Activated CD4-positive, alpha-beta T cell treated with anti-CD3 and anti-CD28 coated beads for 36 hours (primary cell): ENCODE measurements at regions of chr13 and their contacts with region 1.

Region 1: DNA sequence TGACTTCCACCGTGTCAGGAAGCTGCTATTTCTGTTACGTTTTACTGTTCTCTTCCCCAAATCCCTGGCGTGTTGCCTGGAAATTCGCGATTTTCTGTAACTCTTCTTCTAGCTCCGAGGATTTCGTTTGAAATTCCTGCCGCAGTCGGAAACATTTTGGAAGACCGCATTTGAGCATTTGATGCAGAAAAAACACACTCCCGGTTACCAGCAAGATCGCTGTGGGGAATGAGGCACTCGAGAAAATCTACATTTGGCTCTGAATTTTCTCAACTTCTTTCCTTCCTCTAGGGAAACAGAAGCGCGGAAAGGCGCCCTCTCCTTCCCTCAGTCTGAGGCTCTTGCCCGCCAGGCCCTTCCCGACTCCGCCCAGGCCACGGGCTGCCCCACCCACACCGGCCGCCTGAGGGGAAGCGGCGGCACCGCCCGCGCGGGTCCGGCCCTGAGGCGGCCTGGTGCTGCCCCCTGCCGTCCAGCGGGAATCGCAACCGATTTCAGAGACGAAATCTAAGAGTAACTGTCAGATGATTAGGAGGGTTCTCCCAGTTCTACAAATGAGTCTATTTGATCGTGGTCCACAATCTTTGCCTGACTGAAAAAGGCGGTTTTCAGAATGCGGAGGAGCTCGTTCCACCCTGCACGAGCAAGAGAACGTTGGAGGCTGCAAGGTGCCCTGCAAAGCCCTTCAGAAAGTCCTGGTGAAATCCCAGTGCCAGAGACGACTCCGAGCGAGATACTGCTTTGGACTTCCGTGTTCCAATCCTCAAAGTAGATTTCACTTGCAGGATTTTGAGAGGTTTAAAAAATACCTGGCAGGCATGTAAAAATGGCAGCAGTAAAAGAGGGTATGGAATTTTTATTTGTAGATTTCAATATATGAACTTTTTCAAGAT is 18.4 kb upstream of the TUBGCP3 start:
- DNase-seq: peak; percentile 94
- ATAC-seq: peak; percentile 100
- H3K4me3 Mint-ChIP-seq: peak overlapping the region; percentile 69
- H3K27ac Mint-ChIP-seq: peak overlapping the region; percentile 38
- H3K4me1 Mint-ChIP-seq: peaks cover 7% of the 10 kb centered on the region
- H3K27me3 Mint-ChIP-seq: peaks cover 14% of the 10 kb centered on the region

Region 2: DNA sequence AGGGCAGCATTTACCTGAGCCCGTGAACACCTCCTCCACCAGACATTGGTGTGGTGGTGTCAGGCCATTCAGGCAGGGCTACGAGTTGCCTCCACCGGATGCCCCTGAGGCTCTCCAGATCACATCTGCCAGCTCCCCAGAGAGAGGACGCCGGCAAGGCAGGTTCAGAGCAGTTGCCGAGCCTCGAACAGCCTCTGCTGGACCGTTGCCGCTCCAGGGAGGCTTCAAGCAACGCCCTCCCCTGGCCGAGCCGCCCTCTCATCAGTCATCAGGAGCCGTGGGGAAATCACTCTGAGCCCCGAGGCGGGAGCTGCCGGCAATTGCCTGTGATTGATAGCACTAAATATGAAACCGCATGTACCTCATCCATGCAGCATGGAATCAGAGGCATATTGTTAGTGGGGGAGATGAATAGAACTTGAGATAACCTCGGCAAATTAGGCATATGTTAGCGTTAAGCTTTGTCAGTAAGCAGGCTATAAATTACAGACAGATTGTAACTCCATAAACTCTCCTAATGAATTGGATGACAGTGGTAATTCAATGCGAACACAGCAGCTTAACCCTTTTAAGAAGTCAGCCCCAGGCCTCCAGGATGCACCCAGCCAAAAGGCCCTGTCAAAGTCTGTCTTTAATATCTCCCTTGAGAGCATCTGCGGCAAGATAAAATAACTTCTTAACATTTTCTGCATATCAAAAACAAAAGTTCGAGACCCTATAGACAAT is 260.0 kb before region 1 on chr13:
- CTCF ChIA-PET with region 1: no interaction called
- POLR2A ChIA-PET with region 1: no interaction called
- intact Hi-C with region 1: loop called in 1 of 2 experiments (anchors 10 kb)
- DNase-seq: peak; percentile 41
- ATAC-seq: no peak
- H3K4me3 Mint-ChIP-seq: no peak overlapping the region
- H3K27ac Mint-ChIP-seq: no peak overlapping the region
- H3K4me1 Mint-ChIP-seq: peaks cover 2% of the 10 kb centered on the region
- H3K27me3 Mint-ChIP-seq: peaks cover 43% of the 10 kb centered on the region

Region 3: GRCh38 chr13:112510002-112510780 is 96.2 kb before region 1 on chr13:
- CTCF ChIA-PET with region 1: interaction called, 3 read pairs
- POLR2A ChIA-PET with region 1: no interaction called
- intact Hi-C with region 1: loop called in 1 of 2 experiments (anchors 5 kb)
- DNase-seq: peak; percentile 12
- ATAC-seq: no peak
- H3K4me3 Mint-ChIP-seq: no peak overlapping the region
- H3K27ac Mint-ChIP-seq: no peak overlapping the region
- H3K4me1 Mint-ChIP-seq: peaks cover 9% of the 10 kb centered on the region
- H3K27me3 Mint-ChIP-seq: no peaks in the 10 kb centered on the region

Region 4: DNA sequence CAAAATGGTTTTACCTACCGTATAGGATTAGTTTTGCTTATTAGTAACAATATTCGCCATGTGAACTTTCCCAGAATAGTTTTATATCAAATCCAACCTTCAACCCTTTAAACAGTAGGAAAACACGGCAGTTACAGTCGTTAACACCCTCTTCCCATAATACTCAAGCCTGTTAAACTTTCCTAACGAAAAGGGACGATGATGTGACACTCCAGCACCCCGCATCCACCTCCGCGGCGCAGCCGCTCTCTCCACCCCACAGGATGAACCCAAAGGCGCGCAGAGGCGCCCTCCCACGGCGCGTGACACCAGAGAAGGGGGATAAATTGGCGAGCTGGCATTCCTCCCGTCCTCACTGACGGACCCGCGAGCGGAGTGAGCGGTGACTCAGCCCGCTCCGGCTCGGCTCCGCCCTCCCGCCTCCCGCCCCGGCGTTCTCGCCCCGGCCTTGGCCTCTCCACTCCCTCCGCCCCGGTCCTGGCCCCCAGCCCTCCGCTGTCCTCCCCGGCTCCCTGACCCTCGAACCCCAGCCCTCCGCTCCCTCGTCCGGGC is 19.1 kb before region 1 on chr13:
- CTCF ChIA-PET with region 1: interaction called, 32 read pairs
- POLR2A ChIA-PET with region 1: no interaction called
- intact Hi-C with region 1: loop called (anchors 1 kb)
- DNase-seq: peak; percentile 84
- ATAC-seq: peak; percentile 79
- H3K4me3 Mint-ChIP-seq: peak overlapping the region; percentile 96
- H3K27ac Mint-ChIP-seq: peak overlapping the region; percentile 97
- H3K4me1 Mint-ChIP-seq: peaks cover 46% of the 10 kb centered on the region
- H3K27me3 Mint-ChIP-seq: no peaks in the 10 kb centered on the region